CD4-positive, alpha-beta T cell (primary cell): ENCODE measurements at regions of chr11 and their contacts with region 1.

Region 1: GRCh38 chr11:37006563-37006962 is 408.5 kb upstream of the RAG2 start:
- DNase-seq: no peak
- ATAC-seq: no peak
- H3K4me3 ChIP-seq: no peak overlapping the region
- H3K4me3 Mint-ChIP-seq: no peak overlapping the region
- H3K27ac ChIP-seq: no peak overlapping the region
- H3K27ac Mint-ChIP-seq: no peak overlapping the region
- H3K4me1 ChIP-seq: no peaks in the 10 kb centered on the region
- H3K4me1 Mint-ChIP-seq: no peaks in the 10 kb centered on the region
- H3K27me3 ChIP-seq: no peaks in the 10 kb centered on the region
- H3K27me3 Mint-ChIP-seq: no peaks in the 10 kb centered on the region
- CTCF ChIP-seq: no peak

Region 2: DNA sequence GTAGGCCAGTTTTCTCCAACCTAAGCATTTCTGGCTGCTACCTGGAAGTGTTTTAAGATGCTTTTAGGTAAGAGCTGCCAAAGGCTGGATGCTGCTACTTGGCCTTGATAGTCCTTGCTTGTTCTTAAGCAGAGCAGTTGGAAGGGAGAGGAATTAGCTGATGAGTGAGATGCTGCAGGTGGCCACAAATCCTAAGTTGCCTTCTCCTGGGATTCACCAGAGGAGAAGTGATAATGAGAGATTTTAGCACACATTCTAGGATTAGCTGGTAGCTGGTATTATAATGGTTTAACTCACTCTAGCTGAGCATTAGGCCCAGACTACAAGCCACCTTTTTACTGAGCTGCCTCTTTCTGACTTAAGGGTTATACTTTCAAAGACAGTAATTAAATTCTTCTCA is 34.4 kb after region 1 on chr11:
- CTCF ChIA-PET with region 1: no interaction called
- POLR2A ChIA-PET with region 1: no interaction called
- intact Hi-C with region 1: loop called in 1 of 2 experiments (anchors 5 kb)
- DNase-seq: no peak
- ATAC-seq: no peak
- H3K4me3 ChIP-seq: no peak overlapping the region
- H3K4me3 Mint-ChIP-seq: no peak overlapping the region
- H3K27ac ChIP-seq: no peak overlapping the region
- H3K27ac Mint-ChIP-seq: no peak overlapping the region
- H3K4me1 ChIP-seq: no peaks in the 10 kb centered on the region
- H3K4me1 Mint-ChIP-seq: no peaks in the 10 kb centered on the region
- H3K27me3 ChIP-seq: no peaks in the 10 kb centered on the region
- H3K27me3 Mint-ChIP-seq: no peaks in the 10 kb centered on the region
- CTCF ChIP-seq: no peak